Right lobe of liver (tissue), 6 donors: ENCODE measurements at regions of chr7 and their contacts with region 1.

Region 1: DNA sequence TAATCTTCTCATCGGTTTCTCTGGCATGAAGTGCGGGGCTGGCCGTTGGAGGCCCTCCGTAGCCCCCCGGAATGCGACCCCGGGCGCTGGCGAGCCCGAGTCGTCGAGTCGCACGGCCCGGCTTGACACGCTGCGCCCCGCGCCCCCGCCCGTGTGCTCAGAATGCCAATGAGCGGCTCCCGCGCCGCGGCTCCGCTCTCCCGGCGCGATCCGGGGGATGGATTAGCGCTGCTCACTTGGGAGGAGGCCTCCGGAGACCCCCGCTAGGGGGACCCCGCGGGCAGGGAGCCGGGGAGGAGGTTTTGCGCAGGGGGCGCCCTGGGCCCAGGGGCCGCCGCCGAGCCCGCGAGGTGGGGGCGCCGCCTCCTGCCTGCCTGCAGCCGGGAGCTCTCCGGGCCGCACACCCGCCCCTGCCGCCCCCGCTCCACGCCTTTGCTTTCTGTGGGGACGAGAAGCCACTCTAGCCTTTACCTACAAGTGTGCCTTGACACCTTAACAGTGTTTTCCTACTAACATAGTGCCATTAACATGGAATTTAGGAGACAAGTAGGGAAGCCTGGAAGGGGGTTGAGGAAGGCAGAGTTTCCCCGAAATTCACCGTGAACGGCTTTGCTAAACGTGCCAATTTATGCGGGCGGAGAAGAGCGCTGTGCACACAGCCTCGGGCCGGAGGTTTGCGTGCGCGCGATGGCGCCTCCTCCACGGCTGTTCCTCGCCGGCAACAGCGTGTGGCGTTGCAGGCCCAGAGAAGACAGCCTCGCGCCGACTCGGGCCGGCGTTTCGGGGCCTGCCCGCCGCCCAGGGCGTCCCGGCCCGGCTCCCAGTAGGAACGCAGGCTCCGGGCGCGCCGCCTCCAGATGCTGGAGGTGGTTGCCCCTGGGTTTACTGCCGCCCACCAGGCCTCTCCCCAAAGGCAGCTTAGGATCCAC is 7.1 kb downstream of the SHH start:
- DNase-seq: peak in 1 of 3 donors; percentile 56
- ATAC-seq: no peak
- H3K4me3 ChIP-seq: peak overlapping the region in 1 of 3 donors; percentile 9
- H3K27ac ChIP-seq: no peak overlapping the region
- H3K4me1 ChIP-seq: peaks cover 0 to 19% (median 2%) of the 10 kb centered on the region in 4 donors
- H3K27me3 ChIP-seq: no peaks in the 10 kb centered on the region
- CTCF ChIP-seq: peak in 3 of 4 donors; percentile 14 to 39 (median 16)
- POLR2A ChIP-seq: no peak

Region 2: DNA sequence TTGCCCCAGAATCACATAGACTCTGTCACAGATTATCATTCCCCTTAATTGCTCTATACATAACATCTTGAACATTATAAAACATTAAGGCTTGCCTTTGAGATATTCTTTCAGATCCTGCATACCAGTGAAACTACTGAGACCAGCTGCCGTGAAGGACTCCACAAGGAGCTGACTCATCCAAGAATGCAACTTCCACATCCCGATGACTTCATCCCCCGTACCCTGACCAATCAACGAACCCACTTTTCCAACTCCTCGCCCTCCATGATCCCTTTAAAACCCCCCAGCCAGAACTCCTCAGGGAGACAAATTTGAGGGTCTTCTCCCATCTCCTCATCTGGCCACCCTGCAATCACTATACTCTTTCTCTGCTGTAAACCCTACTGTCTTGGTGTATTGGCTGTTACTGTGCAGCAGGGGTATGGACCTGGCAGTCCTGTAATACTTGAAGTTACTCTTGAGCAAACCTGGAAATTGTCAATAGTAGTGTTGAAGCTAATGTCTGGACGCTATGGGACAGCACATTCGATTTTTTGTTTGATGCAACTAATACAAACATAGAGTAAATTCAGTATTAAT is 685.3 kb before region 1 on chr7:
- intact Hi-C with region 1: no loop called
- DNase-seq: no peak
- ATAC-seq: no peak
- H3K4me3 ChIP-seq: no peak overlapping the region
- H3K27ac ChIP-seq: no peak overlapping the region
- H3K4me1 ChIP-seq: no peaks in the 10 kb centered on the region
- H3K27me3 ChIP-seq: no peaks in the 10 kb centered on the region
- CTCF ChIP-seq: no peak
- POLR2A ChIP-seq: no peak

Region 3: GRCh38 chr7:155660059-155660757 is 145.0 kb before region 1 on chr7:
- intact Hi-C with region 1: no loop called
- DNase-seq: no peak
- ATAC-seq: no peak
- H3K4me3 ChIP-seq: no peak overlapping the region
- H3K27ac ChIP-seq: no peak overlapping the region
- H3K4me1 ChIP-seq: peaks cover 0 to 29% (median 6%) of the 10 kb centered on the region in 4 donors
- H3K27me3 ChIP-seq: no peaks in the 10 kb centered on the region
- CTCF ChIP-seq: no peak
- POLR2A ChIP-seq: no peak

Region 4: GRCh38 chr7:155860840-155861479 is 55.8 kb after region 1 on chr7:
- intact Hi-C with region 1: no loop called
- DNase-seq: peak; percentile 85 to 91 (median 87)
- ATAC-seq: peak; percentile 77 to 86 (median 80)
- H3K4me3 ChIP-seq: no peak overlapping the region
- H3K27ac ChIP-seq: peak overlapping the region in 2 of 3 donors; percentile 73 to 76
- H3K4me1 ChIP-seq: peaks cover 0 to 35% (median 16%) of the 10 kb centered on the region in 4 donors
- H3K27me3 ChIP-seq: no peaks in the 10 kb centered on the region
- CTCF ChIP-seq: peak in 1 of 4 donors; percentile 30
- POLR2A ChIP-seq: peak; percentile 11

Region 5: GRCh38 chr7:156612930-156613329 is 807.8 kb after region 1 on chr7:
- intact Hi-C with region 1: loop called in 1 of 2 experiments (anchors 5 kb)
- DNase-seq: no peak
- ATAC-seq: no peak
- H3K4me3 ChIP-seq: no peak overlapping the region
- H3K27ac ChIP-seq: no peak overlapping the region
- H3K4me1 ChIP-seq: peaks cover 0 to 36% (median 17%) of the 10 kb centered on the region in 4 donors
- H3K27me3 ChIP-seq: no peaks in the 10 kb centered on the region
- CTCF ChIP-seq: no peak
- POLR2A ChIP-seq: no peak